ENCODE measurements at regions of chr1 and their contacts with region 1.

Region 1: DNA sequence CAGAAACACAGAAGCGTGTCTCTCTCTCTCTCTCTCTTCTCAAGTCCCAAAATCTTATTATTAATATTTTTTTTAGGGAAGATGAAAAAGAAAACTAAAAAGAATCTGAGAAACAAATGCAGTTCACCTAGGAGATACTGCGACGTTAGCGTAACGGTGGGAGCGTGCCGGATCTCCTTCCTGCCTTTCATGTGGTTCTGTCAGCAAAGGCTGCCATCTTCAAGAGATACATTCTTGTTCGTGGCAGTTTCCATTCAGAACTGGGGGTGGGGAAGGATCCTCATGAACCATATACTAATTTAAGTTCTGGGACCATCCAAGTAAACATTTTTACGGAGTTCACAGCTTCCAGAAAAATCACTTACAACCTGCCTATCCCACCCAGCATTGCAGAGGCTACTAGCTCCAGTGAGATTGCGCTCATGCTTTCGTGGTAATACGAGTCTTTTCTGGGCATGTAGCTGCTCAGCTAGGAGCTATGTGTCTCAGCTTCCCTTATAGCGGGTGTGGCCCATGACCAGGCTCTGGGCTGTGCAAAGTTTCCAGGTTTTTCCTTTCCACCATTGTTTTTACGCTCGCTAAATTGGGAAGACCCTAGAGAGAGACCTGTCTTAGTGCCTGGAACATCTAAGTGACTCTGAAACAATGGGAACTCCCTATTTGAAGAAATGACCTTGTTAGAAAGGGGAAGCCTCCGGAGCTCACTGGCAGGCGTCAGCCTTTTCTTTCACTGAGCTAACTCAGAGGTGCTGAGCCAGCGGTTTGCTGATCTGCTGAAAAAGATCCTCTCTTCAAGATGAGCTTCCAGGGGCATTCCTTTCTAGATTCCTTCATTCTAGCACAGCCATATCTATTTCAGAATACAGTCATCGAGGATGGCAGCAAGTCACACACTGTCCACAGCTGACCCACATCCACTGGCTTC is 17.3 kb downstream of the SLAMF1 start:
- DNase-seq: peak; percentile 85
- H3K4me3 Mint-ChIP-seq: peak overlapping the region; percentile 69
- H3K27ac Mint-ChIP-seq: peak overlapping the region; percentile 98
- H3K4me1 Mint-ChIP-seq: peaks cover 93% of the 10 kb centered on the region
- H3K27me3 Mint-ChIP-seq: no peaks in the 10 kb centered on the region

Region 2: GRCh38 chr1:160428655-160429054 is 200.9 kb before region 1 on chr1:
- CTCF ChIA-PET with region 1: no interaction called
- POLR2A ChIA-PET with region 1: no interaction called
- intact Hi-C with region 1: loop called (anchors 5 kb)
- DNase-seq: peak; percentile 57
- H3K4me3 Mint-ChIP-seq: no peak overlapping the region
- H3K27ac Mint-ChIP-seq: peak overlapping the region; percentile 77
- H3K4me1 Mint-ChIP-seq: peaks cover 60% of the 10 kb centered on the region
- H3K27me3 Mint-ChIP-seq: no peaks in the 10 kb centered on the region

Region 3: GRCh38 chr1:160575112-160575664 is 54.4 kb before region 1 on chr1:
- CTCF ChIA-PET with region 1: no interaction called
- POLR2A ChIA-PET with region 1: interaction called, 3 read pairs
- intact Hi-C with region 1: loop called (anchors 2 kb)
- DNase-seq: no peak
- H3K4me3 Mint-ChIP-seq: peak overlapping the region; percentile 63
- H3K27ac Mint-ChIP-seq: peak overlapping the region; percentile 96
- H3K4me1 Mint-ChIP-seq: peaks cover 82% of the 10 kb centered on the region
- H3K27me3 Mint-ChIP-seq: no peaks in the 10 kb centered on the region

Region 4: GRCh38 chr1:160664573-160665051 is 35.1 kb after region 1 on chr1:
- CTCF ChIA-PET with region 1: interaction called, 3 read pairs
- POLR2A ChIA-PET with region 1: interaction called, 3 read pairs
- intact Hi-C with region 1: loop called (anchors 2 kb)
- DNase-seq: peak; percentile 70
- H3K4me3 Mint-ChIP-seq: peak overlapping the region; percentile 40
- H3K27ac Mint-ChIP-seq: peak overlapping the region; percentile 94
- H3K4me1 Mint-ChIP-seq: peaks cover 80% of the 10 kb centered on the region
- H3K27me3 Mint-ChIP-seq: no peaks in the 10 kb centered on the region

Region 5: GRCh38 chr1:160768295-160768657 is 138.7 kb after region 1 on chr1:
- CTCF ChIA-PET with region 1: no interaction called
- POLR2A ChIA-PET with region 1: no interaction called
- intact Hi-C with region 1: loop called (anchors 2 kb)
- DNase-seq: peak; percentile 93
- H3K4me3 Mint-ChIP-seq: peak overlapping the region; percentile 78
- H3K27ac Mint-ChIP-seq: peak overlapping the region; percentile 96
- H3K4me1 Mint-ChIP-seq: peaks cover 28% of the 10 kb centered on the region
- H3K27me3 Mint-ChIP-seq: no peaks in the 10 kb centered on the region

Measured in activated CD4-positive, alpha-beta memory T cell treated with anti-CD3 and anti-CD28 coated beads for 36 hours (primary cell).